ENCODE measurements at regions of chr14 and their contacts with region 1.

Region 1: GRCh38 chr14:64294672-64295413 is 672 bp upstream of the ESR2 start:
- DNase-seq: peak; percentile 55 to 88 (median 74)
- ATAC-seq: peak; percentile 88
- H3K4me3 ChIP-seq: peak overlapping the region; percentile 69
- H3K4me3 Mint-ChIP-seq: peak overlapping the region; percentile 70 to 85 (median 82)
- H3K27ac ChIP-seq: no peak overlapping the region
- H3K27ac Mint-ChIP-seq: no peak overlapping the region
- H3K4me1 ChIP-seq: peaks cover 4 to 14% of the 10 kb centered on the region in 2 donors
- H3K4me1 Mint-ChIP-seq: peaks cover 0 to 29% (median 15%) of the 10 kb centered on the region in 7 donors
- H3K27me3 ChIP-seq: no peaks in the 10 kb centered on the region
- H3K27me3 Mint-ChIP-seq: peaks cover 19 to 40% (median 25%) of the 10 kb centered on the region in 5 donors

Region 2: DNA sequence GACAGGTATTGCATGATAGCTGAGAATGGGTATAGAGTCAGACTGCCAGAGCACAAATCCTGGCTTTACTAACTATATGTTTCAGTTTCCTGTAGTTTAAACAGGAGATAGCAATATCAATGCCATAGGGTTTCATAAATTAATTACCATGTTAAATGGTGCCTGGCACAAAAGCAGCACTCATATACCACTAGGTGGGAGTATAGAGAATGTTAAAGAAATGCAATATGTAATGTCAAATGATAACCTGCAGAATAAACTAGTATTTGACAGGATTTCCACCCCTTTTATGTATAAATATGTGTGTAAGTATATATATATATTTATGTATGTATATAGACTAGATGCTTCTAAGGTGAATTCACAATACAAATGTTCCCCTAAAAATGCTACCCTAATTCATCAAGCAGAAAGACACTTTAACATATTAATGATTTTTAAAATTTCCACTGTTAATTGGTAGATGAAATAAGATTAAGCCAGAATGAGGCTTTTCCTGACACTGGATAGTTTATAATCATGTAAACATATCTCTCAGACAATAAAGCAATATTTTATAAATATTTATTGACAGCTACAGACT is 661.8 kb before region 1 on chr14:
- CTCF ChIA-PET with region 1: no interaction called
- POLR2A ChIA-PET with region 1: no interaction called
- intact Hi-C with region 1: loop called (anchors 10 kb)
- DNase-seq: peak in 6 of 9 donors; percentile 31 to 65 (median 58)
- ATAC-seq: peak; percentile 92
- H3K4me3 ChIP-seq: no peak overlapping the region
- H3K4me3 Mint-ChIP-seq: no peak overlapping the region
- H3K27ac ChIP-seq: no peak overlapping the region
- H3K27ac Mint-ChIP-seq: peak overlapping the region in 3 of 9 donors; percentile 5 to 64 (median 42)
- H3K4me1 ChIP-seq: peaks cover 0 to 7% of the 10 kb centered on the region in 2 donors
- H3K4me1 Mint-ChIP-seq: peaks cover 29 to 78% (median 63%) of the 10 kb centered on the region in 7 donors
- H3K27me3 ChIP-seq: no peaks in the 10 kb centered on the region
- H3K27me3 Mint-ChIP-seq: no peaks in the 10 kb centered on the region

Region 3: GRCh38 chr14:63840981-63841380 is 453.9 kb before region 1 on chr14:
- CTCF ChIA-PET with region 1: no interaction called
- POLR2A ChIA-PET with region 1: no interaction called
- intact Hi-C with region 1: loop called in 1 of 2 experiments (anchors 5 kb)
- DNase-seq: peak in 8 of 9 donors; percentile 20 to 57 (median 46)
- ATAC-seq: peak; percentile 80
- H3K4me3 ChIP-seq: no peak overlapping the region
- H3K4me3 Mint-ChIP-seq: no peak overlapping the region
- H3K27ac ChIP-seq: no peak overlapping the region
- H3K27ac Mint-ChIP-seq: peak overlapping the region in 1 of 9 donors; percentile 31
- H3K4me1 ChIP-seq: peaks cover 0 to 3% of the 10 kb centered on the region in 2 donors
- H3K4me1 Mint-ChIP-seq: peaks cover 0 to 5% (median 4%) of the 10 kb centered on the region in 7 donors
- H3K27me3 ChIP-seq: no peaks in the 10 kb centered on the region
- H3K27me3 Mint-ChIP-seq: peaks cover 0 to 4% (median 0%) of the 10 kb centered on the region in 5 donors

Region 4: DNA sequence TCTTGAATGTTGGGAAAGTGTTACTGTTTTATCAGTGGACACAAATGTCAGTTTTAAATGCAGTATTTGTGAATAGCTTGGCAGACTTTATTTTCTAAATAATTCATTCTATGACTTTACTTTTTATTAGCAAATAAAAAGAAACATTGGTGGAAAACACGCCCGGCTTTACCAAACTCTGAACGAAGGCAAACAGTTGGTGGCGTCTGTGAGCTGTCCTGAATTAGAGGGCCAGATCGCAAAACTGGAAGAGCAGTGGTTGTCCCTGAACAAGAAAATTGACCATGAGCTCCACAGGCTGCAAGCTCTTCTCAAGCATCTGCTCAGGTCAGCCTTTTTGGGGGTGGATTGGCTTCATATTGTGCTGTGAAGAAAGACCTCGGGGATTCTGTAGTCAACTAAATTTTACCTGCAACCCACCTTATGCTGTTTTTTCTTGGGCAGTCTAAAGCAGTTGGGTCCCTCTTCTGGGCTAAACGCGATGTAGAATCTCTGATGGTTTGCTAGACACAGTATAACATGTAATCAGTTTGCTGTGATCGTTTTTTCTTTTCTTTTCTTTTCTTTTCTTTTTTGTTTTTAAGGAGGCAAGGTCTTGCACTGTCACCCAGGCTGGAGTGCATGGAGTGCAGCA is 157.1 kb before region 1 on chr14:
- CTCF ChIA-PET with region 1: no interaction called
- POLR2A ChIA-PET with region 1: no interaction called
- intact Hi-C with region 1: loop called in 1 of 2 experiments (anchors 5 kb)
- DNase-seq: no peak
- ATAC-seq: no peak
- H3K4me3 ChIP-seq: no peak overlapping the region
- H3K4me3 Mint-ChIP-seq: no peak overlapping the region
- H3K27ac ChIP-seq: no peak overlapping the region
- H3K27ac Mint-ChIP-seq: no peak overlapping the region
- H3K4me1 ChIP-seq: no peaks in the 10 kb centered on the region
- H3K4me1 Mint-ChIP-seq: no peaks in the 10 kb centered on the region
- H3K27me3 ChIP-seq: no peaks in the 10 kb centered on the region
- H3K27me3 Mint-ChIP-seq: no peaks in the 10 kb centered on the region

Region 5: GRCh38 chr14:64186231-64187129 is 108.4 kb before region 1 on chr14:
- CTCF ChIA-PET with region 1: no interaction called
- POLR2A ChIA-PET with region 1: no interaction called
- intact Hi-C with region 1: no loop called
- DNase-seq: no peak
- ATAC-seq: no peak
- H3K4me3 ChIP-seq: no peak overlapping the region
- H3K4me3 Mint-ChIP-seq: no peak overlapping the region
- H3K27ac ChIP-seq: no peak overlapping the region
- H3K27ac Mint-ChIP-seq: no peak overlapping the region
- H3K4me1 ChIP-seq: no peaks in the 10 kb centered on the region
- H3K4me1 Mint-ChIP-seq: peaks cover 0 to 4% (median 0%) of the 10 kb centered on the region in 7 donors
- H3K27me3 ChIP-seq: no peaks in the 10 kb centered on the region
- H3K27me3 Mint-ChIP-seq: no peaks in the 10 kb centered on the region

Region 6: GRCh38 chr14:64234877-64235651 is 59.8 kb before region 1 on chr14:
- CTCF ChIA-PET with region 1: interaction called, 3 read pairs
- POLR2A ChIA-PET with region 1: no interaction called
- intact Hi-C with region 1: loop called in 1 of 2 experiments (anchors 2 kb)
- DNase-seq: no peak
- ATAC-seq: no peak
- H3K4me3 ChIP-seq: no peak overlapping the region
- H3K4me3 Mint-ChIP-seq: no peak overlapping the region
- H3K27ac ChIP-seq: no peak overlapping the region
- H3K27ac Mint-ChIP-seq: peak overlapping the region in 3 of 9 donors; percentile 41 to 69 (median 53)
- H3K4me1 ChIP-seq: no peaks in the 10 kb centered on the region
- H3K4me1 Mint-ChIP-seq: peaks cover 0 to 12% (median 0%) of the 10 kb centered on the region in 7 donors
- H3K27me3 ChIP-seq: no peaks in the 10 kb centered on the region
- H3K27me3 Mint-ChIP-seq: peaks cover 0 to 12% (median 0%) of the 10 kb centered on the region in 5 donors

Measured in naive thymus-derived CD4-positive, alpha-beta T cell (primary cell).